Activated CD4-positive, alpha-beta T cell treated with anti-CD3 and anti-CD28 coated beads, Interleukin-2, amount 10 ng/mL, durations not matched to agents 7 days and 5 days (primary cell): ENCODE measurements at regions of chr6 and their contacts with region 1.

Region 1: GRCh38 chr6:44237813-44238433 is 9.0 kb upstream of the HSP90AB1 start:
- DNase-seq: peak; percentile 77
- H3K4me3 Mint-ChIP-seq: peak overlapping the region; percentile 75
- H3K27ac Mint-ChIP-seq: peak overlapping the region; percentile 95
- H3K4me1 Mint-ChIP-seq: peaks cover 28% of the 10 kb centered on the region
- H3K27me3 Mint-ChIP-seq: no peaks in the 10 kb centered on the region

Region 2: DNA sequence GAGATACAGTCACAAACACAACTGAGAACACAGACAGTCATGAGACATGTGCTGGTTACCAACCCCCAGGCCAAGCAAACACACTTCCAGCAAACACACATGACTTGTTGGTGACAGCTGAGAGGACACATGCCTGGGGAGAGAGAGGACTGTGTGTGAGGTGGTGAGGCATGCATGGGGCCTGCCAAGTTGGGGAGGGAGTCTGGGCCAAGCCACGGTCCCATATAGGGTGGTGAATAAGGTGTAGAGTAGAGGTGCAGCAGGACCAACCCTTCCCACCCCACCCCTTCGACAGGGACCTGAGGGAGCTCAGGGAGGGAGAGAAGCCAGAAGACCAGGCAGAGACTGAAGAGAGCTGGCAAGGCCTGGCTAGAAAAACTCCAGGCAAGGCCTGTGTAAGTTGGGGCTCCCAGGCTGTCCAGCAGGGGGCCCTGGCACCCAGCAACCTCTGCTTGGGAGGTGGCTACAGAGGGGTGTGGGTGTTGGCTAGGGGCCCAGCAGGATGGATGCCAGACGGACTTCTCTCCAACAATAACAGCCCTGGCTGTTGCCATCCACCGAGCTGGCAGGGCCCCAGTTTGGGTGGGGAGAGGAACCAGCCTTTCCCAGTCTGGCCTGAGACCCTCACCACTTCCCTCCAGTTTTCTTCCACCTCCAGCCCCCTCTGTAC is 16.5 kb before region 1 on chr6:
- CTCF ChIA-PET with region 1: interaction called, 14 read pairs
- POLR2A ChIA-PET with region 1: no interaction called
- DNase-seq: peak; percentile 79
- H3K4me3 Mint-ChIP-seq: peak overlapping the region; percentile 20
- H3K27ac Mint-ChIP-seq: peak overlapping the region; percentile 46
- H3K4me1 Mint-ChIP-seq: peaks cover 44% of the 10 kb centered on the region
- H3K27me3 Mint-ChIP-seq: peaks cover 11% of the 10 kb centered on the region

Region 3: GRCh38 chr6:44297063-44298038 is 59.4 kb after region 1 on chr6:
- CTCF ChIA-PET with region 1: no interaction called
- POLR2A ChIA-PET with region 1: no interaction called
- DNase-seq: peak; percentile 45
- H3K4me3 Mint-ChIP-seq: peak overlapping the region; percentile 27
- H3K27ac Mint-ChIP-seq: no peak overlapping the region
- H3K4me1 Mint-ChIP-seq: peaks cover 8% of the 10 kb centered on the region
- H3K27me3 Mint-ChIP-seq: peaks cover 43% of the 10 kb centered on the region